Mammary epithelial cell (primary cell): ENCODE measurements at regions of chr4 and their contacts with region 1.

Region 1: DNA sequence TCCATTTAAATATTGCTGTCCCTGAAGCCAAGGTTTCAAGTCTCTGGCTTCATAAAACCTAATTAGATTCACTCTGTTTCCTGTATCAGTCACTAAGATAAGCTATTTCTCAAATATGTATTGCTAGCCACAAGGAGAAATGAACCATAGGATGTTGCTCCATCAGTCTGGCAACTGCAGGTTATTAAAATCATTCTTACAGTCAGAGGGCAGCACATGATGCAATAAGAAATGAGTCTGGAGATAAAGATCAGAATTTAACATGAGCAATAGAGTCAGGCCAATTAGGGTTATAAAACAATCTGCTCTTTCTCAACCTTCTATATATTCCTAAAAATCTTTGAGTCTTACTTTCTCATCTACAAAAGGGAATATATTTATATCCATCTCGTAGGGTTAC is 7.2 kb downstream of the PRKG2 start:
- DNase-seq: peak; percentile 95
- H3K4me3 ChIP-seq: no peak overlapping the region
- H3K27ac ChIP-seq: no peak overlapping the region
- H3K4me1 ChIP-seq: peaks cover 11% of the 10 kb centered on the region
- H3K27me3 ChIP-seq: no peaks in the 10 kb centered on the region
- CTCF ChIP-seq: no peak

Region 2: GRCh38 chr4:81164623-81165416 is 43.0 kb before region 1 on chr4:
- CTCF ChIA-PET with region 1: no interaction called
- dilution Hi-C with region 1: no loop called
- in situ Hi-C with region 1: no loop called
- intact Hi-C with region 1: loop called (anchors 2 kb)
- DNase-seq: peak; percentile 96
- H3K4me3 ChIP-seq: peak overlapping the region in 2 of 3 experiments; percentile 6 to 22
- H3K27ac ChIP-seq: peak overlapping the region; percentile 59
- H3K4me1 ChIP-seq: peaks cover 27% of the 10 kb centered on the region
- H3K27me3 ChIP-seq: no peaks in the 10 kb centered on the region
- CTCF ChIP-seq: no peak